ENCODE measurements at regions of chr10 and their contacts with region 1.

Region 1: GRCh38 chr10:64996886-64997285 is 1475.7 kb downstream of the REEP3 start:
- DNase-seq: no peak
- ATAC-seq: no peak
- H3K4me3 ChIP-seq: no peak overlapping the region
- H3K4me3 Mint-ChIP-seq: no peak overlapping the region
- H3K27ac ChIP-seq: no peak overlapping the region
- H3K27ac Mint-ChIP-seq: no peak overlapping the region
- H3K4me1 ChIP-seq: no peaks in the 10 kb centered on the region
- H3K4me1 Mint-ChIP-seq: no peaks in the 10 kb centered on the region
- H3K27me3 ChIP-seq: no peaks in the 10 kb centered on the region
- H3K27me3 Mint-ChIP-seq: no peaks in the 10 kb centered on the region

Region 2: DNA sequence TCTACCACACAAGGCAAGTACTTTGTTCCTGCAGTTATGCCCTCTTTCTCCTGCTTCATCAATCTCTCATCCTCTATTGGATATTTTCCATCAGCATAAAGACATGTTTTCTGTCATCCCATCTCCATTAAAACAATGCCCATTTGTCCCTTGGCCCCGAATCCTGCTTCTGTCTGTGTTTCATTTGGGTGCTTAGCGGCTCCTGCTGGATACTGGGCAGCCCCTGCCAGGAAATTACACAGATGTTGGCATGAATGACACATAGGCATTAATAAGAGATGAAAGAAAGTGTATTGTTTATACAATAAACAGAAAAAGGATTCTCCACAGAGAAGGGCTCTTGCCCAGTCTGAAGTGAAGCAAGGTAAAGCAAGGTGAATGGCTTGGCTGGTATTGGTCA is 710.4 kb before region 1 on chr10:
- CTCF ChIA-PET with region 1: no interaction called
- POLR2A ChIA-PET with region 1: no interaction called
- intact Hi-C with region 1: loop called in 1 of 2 experiments (anchors 5 kb)
- DNase-seq: no peak
- ATAC-seq: no peak
- H3K4me3 ChIP-seq: no peak overlapping the region
- H3K4me3 Mint-ChIP-seq: no peak overlapping the region
- H3K27ac ChIP-seq: no peak overlapping the region
- H3K27ac Mint-ChIP-seq: no peak overlapping the region
- H3K4me1 ChIP-seq: no peaks in the 10 kb centered on the region
- H3K4me1 Mint-ChIP-seq: no peaks in the 10 kb centered on the region
- H3K27me3 ChIP-seq: no peaks in the 10 kb centered on the region
- H3K27me3 Mint-ChIP-seq: no peaks in the 10 kb centered on the region

Measured in naive thymus-derived CD4-positive, alpha-beta T cell (primary cell).